WTC11 (cell line): ENCODE measurements at regions of chr17 and their contacts with region 1.

Region 1: DNA sequence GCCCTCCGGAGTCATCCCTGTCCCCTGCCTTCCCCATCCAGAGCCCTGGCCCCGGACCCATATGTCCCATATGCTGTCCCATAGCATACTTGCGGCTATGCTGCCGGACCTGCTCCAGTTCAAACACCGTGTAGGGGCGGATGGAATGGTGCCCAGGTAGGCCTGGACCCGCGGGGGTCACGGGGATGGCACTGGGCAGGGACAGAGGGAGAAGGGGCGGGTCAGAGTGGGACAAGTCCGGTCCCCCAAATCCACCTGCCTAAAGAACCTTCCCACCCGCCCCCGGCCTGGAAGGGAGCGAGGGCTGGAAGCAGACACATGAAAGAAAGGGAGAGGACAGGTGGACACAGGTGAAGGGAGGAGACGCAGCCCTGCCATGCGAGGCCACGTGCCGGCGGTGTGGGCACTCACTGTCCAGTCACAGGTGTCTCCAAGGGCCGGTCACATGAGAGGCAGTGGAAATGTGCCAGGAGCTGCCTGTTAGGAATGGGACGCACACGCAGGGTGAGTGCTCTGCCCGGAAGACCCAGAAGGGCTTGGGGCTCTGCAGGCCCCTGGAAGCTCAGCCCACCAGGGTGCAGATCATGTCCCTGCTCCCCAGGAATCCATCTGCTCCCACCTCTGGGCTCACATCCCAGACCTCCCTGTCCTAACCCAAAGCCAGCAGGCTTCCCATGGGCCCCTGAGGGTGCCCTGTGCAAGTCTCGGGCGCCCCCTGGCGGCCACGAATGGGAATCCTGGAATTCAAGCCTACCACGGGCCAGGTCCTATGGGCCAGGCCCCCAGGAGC is 14.0 kb downstream of the UBALD2 start:
- DNase-seq: peak; percentile 94
- ATAC-seq: peak; percentile 93
- H3K4me3 Mint-ChIP-seq: no peak overlapping the region
- H3K27ac Mint-ChIP-seq: no peak overlapping the region
- H3K4me1 Mint-ChIP-seq: no peaks in the 10 kb centered on the region
- H3K27me3 Mint-ChIP-seq: no peaks in the 10 kb centered on the region
- CTCF ChIP-seq: peak; percentile 96

Region 2: GRCh38 chr17:76072148-76072858 is 206.8 kb before region 1 on chr17 and contains the start of gene SRP68:
- CTCF ChIA-PET with region 1: interaction called, 19 read pairs
- POLR2A ChIA-PET with region 1: no interaction called
- DNase-seq: peak; percentile 95
- ATAC-seq: peak; percentile 86
- H3K4me3 Mint-ChIP-seq: peak within 1 kb of the TSS; percentile 97
- H3K27ac Mint-ChIP-seq: peak within 1 kb of the TSS; percentile 89
- H3K4me1 Mint-ChIP-seq: peaks cover 30% of the 10 kb centered on the region
- H3K27me3 Mint-ChIP-seq: peaks cover 40% of the 10 kb centered on the region
- CTCF ChIP-seq: no peak
- total RNA-seq, gene SRP68: 80.5 to 90.7 TPM (median 82.0 TPM) in 3 replicates

Region 3: GRCh38 chr17:76132574-76133338 is 146.4 kb before region 1 on chr17:
- CTCF ChIA-PET with region 1: interaction called, 19 read pairs
- POLR2A ChIA-PET with region 1: no interaction called
- DNase-seq: peak; percentile 83
- ATAC-seq: peak; percentile 30
- H3K4me3 Mint-ChIP-seq: peak overlapping the region; percentile 55
- H3K27ac Mint-ChIP-seq: peak overlapping the region; percentile 71
- H3K4me1 Mint-ChIP-seq: peaks cover 63% of the 10 kb centered on the region
- H3K27me3 Mint-ChIP-seq: peaks cover 41% of the 10 kb centered on the region
- CTCF ChIP-seq: no peak

Region 4: DNA sequence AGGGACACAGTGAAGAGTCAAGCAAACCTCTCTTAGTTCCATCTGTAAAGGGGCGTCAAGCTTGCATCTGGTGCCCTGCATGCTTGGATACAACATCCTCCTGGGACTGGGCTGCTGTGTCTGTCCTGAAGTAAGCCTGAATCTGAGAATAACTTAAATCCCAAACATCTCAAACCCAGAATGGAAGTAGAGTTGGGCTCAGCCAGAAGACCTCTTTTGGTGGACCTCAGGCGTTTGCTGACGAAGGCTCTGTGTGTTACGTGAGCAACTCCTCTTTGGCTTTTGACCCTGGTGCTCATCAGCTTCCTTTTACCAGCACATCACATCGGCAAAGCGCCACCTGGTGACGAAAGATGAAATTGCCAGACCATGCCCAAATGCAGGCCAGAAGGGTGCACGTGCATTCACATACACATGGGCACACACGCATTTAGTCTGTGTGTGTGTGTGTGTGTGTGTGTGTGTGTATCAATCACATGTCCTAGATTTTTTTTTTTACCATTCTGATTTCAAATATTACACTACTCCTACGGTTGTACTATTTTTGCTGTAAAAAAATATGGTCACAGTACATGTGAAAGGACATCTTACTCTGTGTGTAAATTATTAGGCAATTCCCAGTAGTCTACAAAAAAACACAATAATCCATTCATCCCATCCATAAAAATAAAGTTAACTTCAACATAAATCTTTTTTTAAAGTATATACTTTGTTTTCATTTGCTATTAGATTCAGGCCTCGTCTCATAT is 97.0 kb before region 1 on chr17:
- CTCF ChIA-PET with region 1: interaction called, 56 read pairs
- POLR2A ChIA-PET with region 1: no interaction called
- DNase-seq: peak; percentile 94
- ATAC-seq: peak; percentile 90
- H3K4me3 Mint-ChIP-seq: no peak overlapping the region
- H3K27ac Mint-ChIP-seq: no peak overlapping the region
- H3K4me1 Mint-ChIP-seq: peaks cover 9% of the 10 kb centered on the region
- H3K27me3 Mint-ChIP-seq: peaks cover 4% of the 10 kb centered on the region; the same call in 1 of the 2 replicates
- CTCF ChIP-seq: peak; percentile 83

Region 5: DNA sequence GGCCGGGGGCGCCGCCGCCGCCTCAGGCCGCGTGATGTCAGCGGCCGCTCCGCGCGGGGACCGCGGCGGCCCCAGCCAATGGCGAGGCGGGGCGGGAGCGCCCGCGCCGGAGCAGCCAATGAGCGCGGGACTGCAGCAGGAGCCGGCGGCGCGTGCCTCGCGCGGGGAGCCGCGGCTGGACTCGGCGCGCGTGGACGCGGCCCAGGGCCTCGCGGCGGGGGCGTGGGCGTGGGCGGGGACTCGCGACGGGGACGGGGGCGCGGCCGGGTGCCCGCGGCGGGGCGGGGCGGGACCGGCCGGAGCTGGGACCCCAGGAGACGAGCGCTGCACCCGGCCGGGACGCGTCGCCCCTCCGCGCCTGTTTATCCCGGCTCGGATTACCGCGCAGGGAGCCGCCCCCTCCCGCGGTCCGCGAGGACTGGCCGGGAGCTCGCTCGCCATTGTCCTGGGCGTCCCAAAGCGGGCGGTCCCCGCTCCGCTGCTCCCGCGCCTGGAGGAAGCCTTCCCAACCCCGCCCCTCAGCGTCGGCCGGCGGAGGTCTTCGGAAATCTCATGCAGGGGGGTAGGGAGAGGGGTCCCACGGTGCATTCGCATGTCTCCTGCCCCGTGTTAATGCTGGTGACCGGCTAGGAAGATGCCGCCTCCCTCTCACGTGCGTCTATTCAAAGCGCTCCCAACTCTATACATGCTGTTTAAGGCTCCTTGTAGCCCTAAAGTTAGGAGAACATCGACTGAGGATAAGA is 38.5 kb before region 1 on chr17 and contains the start of gene RNF157:
- CTCF ChIA-PET with region 1: interaction called, 19 read pairs
- POLR2A ChIA-PET with region 1: no interaction called
- DNase-seq: peak; percentile 81
- ATAC-seq: peak; percentile 86
- H3K4me3 Mint-ChIP-seq: peak within 1 kb of the TSS; percentile 81
- H3K27ac Mint-ChIP-seq: peak within 1 kb of the TSS; percentile 50; the same call in 1 of the 2 replicates
- H3K4me1 Mint-ChIP-seq: peaks cover 10% of the 10 kb centered on the region
- H3K27me3 Mint-ChIP-seq: peaks cover 62% of the 10 kb centered on the region
- CTCF ChIP-seq: no peak
- total RNA-seq, gene RNF157: 11.2 to 15.1 TPM (median 13.7 TPM) in 3 replicates

Region 6: GRCh38 chr17:76264755-76265596 is 14.2 kb before region 1 on chr17 and contains the start of gene UBALD2:
- CTCF ChIA-PET with region 1: interaction called, 70 read pairs
- POLR2A ChIA-PET with region 1: interaction called, 4 read pairs
- DNase-seq: peak; percentile 99
- ATAC-seq: peak; percentile 95
- H3K4me3 Mint-ChIP-seq: peak within 1 kb of the TSS; percentile 71
- H3K27ac Mint-ChIP-seq: peak within 1 kb of the TSS; percentile 80
- H3K4me1 Mint-ChIP-seq: peaks cover 43% of the 10 kb centered on the region
- H3K27me3 Mint-ChIP-seq: no peaks in the 10 kb centered on the region
- CTCF ChIP-seq: no peak
- total RNA-seq, gene UBALD2: 24.4 to 30.3 TPM (median 28.2 TPM) in 3 replicates